ENCODE measurements at regions of chr13 and their contacts with region 1.

Region 1: DNA sequence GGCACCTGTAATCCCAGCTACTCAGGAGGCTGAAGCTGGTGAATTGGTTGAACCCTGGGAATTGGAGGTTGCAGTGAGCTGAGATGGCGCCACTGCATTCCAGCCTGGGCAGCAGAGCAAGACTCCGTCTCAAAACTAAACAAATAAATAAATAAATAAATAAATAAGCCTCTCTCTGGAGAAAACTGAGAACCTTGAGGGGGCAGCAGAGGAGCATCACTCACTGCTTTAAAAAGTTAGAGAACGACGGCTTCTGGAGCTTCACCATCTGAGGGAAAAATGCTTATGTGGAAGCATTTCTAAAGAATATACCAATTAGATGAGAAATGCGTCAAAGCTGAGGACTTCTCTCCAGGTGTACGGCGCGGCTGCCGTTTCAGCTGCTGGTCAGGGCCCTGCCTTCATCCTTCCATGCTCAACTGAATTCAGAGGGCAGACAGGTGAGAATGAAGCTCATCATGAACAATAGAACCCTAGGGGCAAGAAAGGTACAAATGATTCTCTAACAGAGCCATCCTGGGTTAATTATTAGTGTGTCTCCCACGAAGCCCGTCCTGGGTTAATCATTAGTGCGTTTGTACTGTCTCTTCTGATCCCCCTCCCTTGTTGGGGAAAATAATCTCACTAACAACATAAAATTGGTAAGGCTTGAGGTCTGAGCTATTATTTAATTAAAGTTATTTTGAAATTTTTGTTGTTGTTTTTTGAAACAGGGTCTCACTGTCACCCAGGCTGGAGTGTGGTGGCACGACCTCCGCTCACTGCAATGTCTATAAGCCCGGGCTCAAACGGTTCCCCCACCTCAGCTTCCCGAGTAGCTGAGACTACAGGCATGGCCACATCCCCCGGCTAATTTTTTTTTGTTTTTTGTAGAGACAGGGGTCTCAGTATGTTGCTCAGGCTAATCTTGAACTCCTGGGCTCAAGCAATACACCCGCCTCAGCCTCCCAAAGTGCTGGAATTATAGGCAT is 80.1 kb downstream of the IPO5 start:
- DNase-seq: no peak
- H3K4me3 ChIP-seq: no peak overlapping the region
- H3K27ac ChIP-seq: no peak overlapping the region
- H3K4me1 ChIP-seq: peaks cover 0 to 4% (median 0%) of the 10 kb centered on the region in 4 experiments; a peak in 1 of 7 replicates
- H3K27me3 ChIP-seq: no peaks in the 10 kb centered on the region; a peak in 1 of 7 replicates
- CTCF ChIP-seq: peak in 2 of 3 experiments; percentile 26 to 47; a peak in 3 of 4 replicates
- EP300 ChIP-seq: no peak
- POLR2A ChIP-seq: no peak
- RAD21 ChIP-seq: peak; percentile 76 to 81

Region 2: GRCh38 chr13:97866346-97866745 is 167.2 kb before region 1 on chr13:
- CTCF ChIA-PET with region 1: no interaction called
- POLR2A ChIA-PET with region 1: no interaction called
- DNase-seq: no peak
- H3K4me3 ChIP-seq: no peak overlapping the region
- H3K27ac ChIP-seq: no peak overlapping the region
- H3K4me1 ChIP-seq: no peaks in the 10 kb centered on the region
- H3K27me3 ChIP-seq: no peaks in the 10 kb centered on the region
- CTCF ChIP-seq: no peak
- EP300 ChIP-seq: no peak
- POLR2A ChIP-seq: no peak
- RAD21 ChIP-seq: no peak

Region 3: GRCh38 chr13:98022210-98022609 is 11.4 kb before region 1 on chr13:
- CTCF ChIA-PET with region 1: interaction called, 12 read pairs
- POLR2A ChIA-PET with region 1: interaction called, 14 read pairs
- DNase-seq: no peak
- H3K4me3 ChIP-seq: no peak overlapping the region
- H3K27ac ChIP-seq: no peak overlapping the region
- H3K4me1 ChIP-seq: peaks cover 0 to 5% (median 3%) of the 10 kb centered on the region in 4 experiments; a peak in 4 of 7 replicates
- H3K27me3 ChIP-seq: no peaks in the 10 kb centered on the region
- CTCF ChIP-seq: no peak
- EP300 ChIP-seq: no peak
- POLR2A ChIP-seq: peak in 1 of 2 experiments; percentile 31; a peak in 1 of 3 replicates
- RAD21 ChIP-seq: no peak

Region 4: DNA sequence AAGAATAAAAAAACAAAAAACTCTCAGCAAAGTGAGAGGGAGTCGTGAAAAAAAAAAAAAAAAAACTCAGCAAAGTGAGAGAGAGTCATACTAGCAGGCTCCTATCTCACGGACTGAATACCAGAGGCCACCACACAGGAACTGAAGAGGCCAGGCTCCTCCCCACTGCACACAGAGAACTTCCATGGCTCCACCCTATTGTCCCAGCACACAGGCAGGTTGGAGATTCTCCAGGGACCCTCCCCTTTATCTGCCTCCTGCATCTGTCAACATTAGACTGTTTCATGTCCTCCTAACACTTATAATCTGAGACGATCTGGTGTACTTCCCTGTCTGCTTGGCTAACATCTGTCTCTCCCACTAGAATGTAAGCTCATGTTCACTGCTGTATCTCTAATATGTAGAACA is 72.4 kb after region 1 on chr13:
- CTCF ChIA-PET with region 1: interaction called, 15 read pairs
- POLR2A ChIA-PET with region 1: no interaction called
- DNase-seq: no peak
- H3K4me3 ChIP-seq: no peak overlapping the region
- H3K27ac ChIP-seq: no peak overlapping the region
- H3K4me1 ChIP-seq: peaks cover 0 to 11% (median 4%) of the 10 kb centered on the region in 4 experiments; a peak in 4 of 7 replicates
- H3K27me3 ChIP-seq: no peaks in the 10 kb centered on the region
- CTCF ChIP-seq: no peak
- EP300 ChIP-seq: no peak
- POLR2A ChIP-seq: no peak
- RAD21 ChIP-seq: no peak

Region 5: GRCh38 chr13:98273824-98274742 is 240.5 kb after region 1 on chr13:
- CTCF ChIA-PET with region 1: no interaction called
- POLR2A ChIA-PET with region 1: no interaction called
- DNase-seq: no peak
- H3K4me3 ChIP-seq: peak overlapping the region in 1 of 4 experiments; percentile 29; a peak in 1 of 8 replicates
- H3K27ac ChIP-seq: peak overlapping the region; percentile 48
- H3K4me1 ChIP-seq: peaks cover 2 to 27% (median 17%) of the 10 kb centered on the region in 4 experiments; a peak in 6 of 7 replicates
- H3K27me3 ChIP-seq: no peaks in the 10 kb centered on the region
- CTCF ChIP-seq: no peak
- EP300 ChIP-seq: no peak
- POLR2A ChIP-seq: 0 out of 3 replicates have a peak, but pooled peaks of 1 of the 2 experiments have one; percentile 41
- RAD21 ChIP-seq: peak in 1 of 2 experiments; percentile 4; a peak in 1 of 4 replicates

Region 6: DNA sequence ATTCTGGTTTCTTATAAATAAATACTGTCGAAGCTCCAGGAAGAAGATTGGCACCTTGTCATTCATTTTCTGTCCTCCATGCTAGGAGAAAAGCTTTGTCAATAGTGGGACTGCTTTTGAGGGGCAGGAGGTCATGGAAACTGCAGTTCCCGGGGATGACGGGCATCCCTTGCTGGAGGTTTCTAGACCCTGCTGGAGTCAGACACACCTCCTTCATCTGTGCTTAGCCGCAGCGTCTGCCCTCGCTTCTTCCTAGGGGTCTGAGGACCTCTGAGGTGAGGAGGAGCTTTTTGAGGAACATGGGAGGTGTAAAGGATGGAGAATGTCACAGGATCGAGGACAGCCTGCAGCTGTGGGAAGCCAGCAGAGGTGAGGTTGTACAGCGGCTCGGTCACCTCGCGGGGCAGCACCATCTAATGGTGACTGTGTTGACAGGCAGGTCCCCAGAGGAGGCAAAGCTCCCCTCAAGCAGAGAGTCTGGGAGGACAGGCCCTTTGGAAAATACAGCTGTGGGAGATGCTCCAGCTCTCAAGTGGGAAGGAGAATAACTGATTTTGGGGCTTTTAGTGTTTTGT is 316.3 kb after region 1 on chr13:
- CTCF ChIA-PET with region 1: interaction called, 14 read pairs
- POLR2A ChIA-PET with region 1: no interaction called
- DNase-seq: peak in 1 of 2 experiments; percentile 70
- H3K4me3 ChIP-seq: no peak overlapping the region
- H3K27ac ChIP-seq: no peak overlapping the region
- H3K4me1 ChIP-seq: no peaks in the 10 kb centered on the region; a peak in 1 of 7 replicates
- H3K27me3 ChIP-seq: no peaks in the 10 kb centered on the region
- CTCF ChIP-seq: peak; percentile 52 to 72 (median 67)
- EP300 ChIP-seq: no peak
- POLR2A ChIP-seq: no peak
- RAD21 ChIP-seq: peak; percentile 71 to 79

Region 7: DNA sequence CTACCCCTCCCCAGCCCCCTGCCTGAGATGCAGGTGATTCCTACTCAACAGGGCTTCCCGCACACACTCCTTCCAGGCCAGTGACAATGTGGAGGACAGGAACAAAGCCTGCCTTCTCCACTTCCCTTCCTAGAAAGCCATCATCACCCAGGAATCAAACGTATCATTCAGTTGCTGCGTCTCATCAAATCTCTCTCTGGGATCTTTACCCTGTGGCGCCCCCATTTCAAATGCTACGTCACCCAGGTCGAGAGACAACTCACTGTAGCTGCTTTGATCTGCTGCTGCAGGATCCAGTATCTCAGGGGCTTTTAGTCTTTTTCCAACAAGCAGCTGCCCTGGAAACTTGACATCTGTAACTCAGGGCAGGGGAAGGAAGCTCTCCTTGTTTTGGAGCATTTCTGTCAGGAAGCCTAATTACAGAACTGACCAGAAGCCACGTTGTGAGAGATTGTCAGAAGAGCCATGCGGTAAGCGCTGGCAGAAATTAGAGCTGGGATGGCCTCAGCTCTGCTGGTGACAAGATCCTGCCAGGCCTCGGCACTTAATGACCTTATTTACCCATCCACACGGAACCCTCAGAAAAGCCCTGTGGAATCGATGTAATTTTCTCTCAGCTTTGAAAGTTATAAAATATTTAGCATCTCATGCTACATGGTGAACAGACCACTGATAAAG is 402.8 kb after region 1 on chr13:
- CTCF ChIA-PET with region 1: interaction called, 12 read pairs
- POLR2A ChIA-PET with region 1: no interaction called
- DNase-seq: no peak
- H3K4me3 ChIP-seq: no peak overlapping the region
- H3K27ac ChIP-seq: no peak overlapping the region
- H3K4me1 ChIP-seq: no peaks in the 10 kb centered on the region
- H3K27me3 ChIP-seq: no peaks in the 10 kb centered on the region
- CTCF ChIP-seq: no peak
- EP300 ChIP-seq: no peak
- POLR2A ChIP-seq: no peak
- RAD21 ChIP-seq: peak in 1 of 2 experiments; percentile 1; a peak in 1 of 4 replicates